Right lobe of liver (tissue), 6 donors: ENCODE measurements at regions of chr10 and their contacts with region 1.

Region 1: DNA sequence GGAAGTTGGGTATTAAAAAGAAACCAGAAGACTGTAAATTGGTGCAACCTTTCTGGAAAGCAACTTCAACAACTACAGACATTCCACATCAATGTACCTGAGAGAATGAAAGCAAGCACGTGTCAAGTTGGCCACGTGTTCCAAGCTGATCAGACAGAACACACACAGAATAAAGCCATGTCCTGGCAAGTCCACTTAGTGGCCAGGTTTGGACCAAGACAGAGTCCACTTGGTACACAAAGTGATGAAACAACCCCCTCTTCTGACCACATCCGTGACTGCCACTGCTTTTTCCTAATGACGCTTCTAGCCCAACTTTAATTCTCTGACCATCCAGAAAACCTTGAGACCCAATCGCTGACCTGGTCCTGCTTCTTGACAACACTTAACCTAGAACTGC is 109.4 kb downstream of the ABLIM1 start:
- DNase-seq: peak in 2 of 3 donors; percentile 71 to 84
- ATAC-seq: peak; percentile 71 to 91 (median 84)
- H3K4me3 ChIP-seq: no peak overlapping the region
- H3K27ac ChIP-seq: no peak overlapping the region
- H3K4me1 ChIP-seq: peaks cover 0 to 16% (median 6%) of the 10 kb centered on the region in 4 donors
- H3K27me3 ChIP-seq: no peaks in the 10 kb centered on the region
- CTCF ChIP-seq: peak; percentile 43 to 74 (median 56)
- POLR2A ChIP-seq: no peak

Region 2: DNA sequence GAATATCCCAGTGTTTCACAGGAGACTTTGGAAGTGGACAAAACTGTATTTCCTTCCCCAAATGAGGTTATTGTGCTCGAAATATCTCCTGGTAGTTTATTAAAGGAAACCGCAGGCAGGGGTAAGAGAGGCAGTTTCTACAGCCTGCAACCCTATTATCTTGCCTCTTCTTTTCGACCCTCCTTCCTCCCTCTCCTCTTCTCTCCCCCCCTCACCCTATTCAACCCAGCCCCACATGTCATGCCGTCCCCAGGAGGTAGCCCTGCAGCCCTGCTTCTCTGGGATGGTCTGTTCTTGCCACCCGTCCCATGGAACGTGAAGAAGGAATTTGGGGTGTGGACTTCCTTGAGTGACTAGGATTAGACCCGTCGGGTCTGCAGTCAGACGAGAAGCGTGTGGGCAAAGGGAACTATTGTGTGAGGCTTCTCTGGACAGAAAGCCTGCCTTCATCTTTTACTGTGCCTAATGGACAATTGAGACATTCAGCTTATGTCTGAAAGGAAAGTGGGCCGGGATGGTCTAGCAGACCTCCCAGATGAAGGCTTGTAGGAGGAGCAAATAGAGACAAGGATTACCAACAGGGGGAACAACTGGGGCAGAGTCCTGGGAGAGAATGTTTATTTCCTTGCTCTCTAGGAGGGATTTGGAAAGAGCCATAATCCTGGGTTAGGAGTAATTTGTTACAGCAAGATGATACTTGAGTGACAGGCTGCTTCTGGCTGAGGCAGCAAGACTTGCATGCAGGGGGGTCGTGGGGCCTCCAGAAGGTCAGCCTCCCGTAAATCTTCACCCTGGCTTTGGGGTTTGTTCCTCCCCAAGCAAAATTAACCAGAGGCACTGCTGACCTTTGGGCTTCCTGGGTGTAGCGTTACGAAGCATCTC is 1520.8 kb before region 1 on chr10:
- intact Hi-C with region 1: no loop called
- DNase-seq: no peak
- ATAC-seq: no peak
- H3K4me3 ChIP-seq: no peak overlapping the region
- H3K27ac ChIP-seq: no peak overlapping the region
- H3K4me1 ChIP-seq: peaks cover 0 to 35% (median 3%) of the 10 kb centered on the region in 4 donors
- H3K27me3 ChIP-seq: no peaks in the 10 kb centered on the region
- CTCF ChIP-seq: no peak
- POLR2A ChIP-seq: no peak

Region 3: GRCh38 chr10:114470956-114471905 is 77.4 kb before region 1 on chr10:
- intact Hi-C with region 1: loop called in 1 of 2 experiments (anchors 10 kb)
- DNase-seq: peak; percentile 60 to 77 (median 64)
- ATAC-seq: peak; percentile 85 to 90 (median 86)
- H3K4me3 ChIP-seq: no peak overlapping the region
- H3K27ac ChIP-seq: peak overlapping the region in 1 of 3 donors; percentile 61
- H3K4me1 ChIP-seq: peaks cover 0 to 37% (median 12%) of the 10 kb centered on the region in 4 donors
- H3K27me3 ChIP-seq: no peaks in the 10 kb centered on the region
- CTCF ChIP-seq: peak; percentile 72 to 96 (median 93)
- POLR2A ChIP-seq: no peak

Region 4: GRCh38 chr10:114694752-114695151 is 146.1 kb after region 1 on chr10:
- intact Hi-C with region 1: loop called in 1 of 2 experiments (anchors 10 kb)
- DNase-seq: peak; percentile 35 to 64 (median 57)
- ATAC-seq: peak; percentile 90 to 97 (median 94)
- H3K4me3 ChIP-seq: no peak overlapping the region
- H3K27ac ChIP-seq: no peak overlapping the region
- H3K4me1 ChIP-seq: no peaks in the 10 kb centered on the region
- H3K27me3 ChIP-seq: no peaks in the 10 kb centered on the region
- CTCF ChIP-seq: peak; percentile 47 to 81 (median 68)
- POLR2A ChIP-seq: no peak

Region 5: DNA sequence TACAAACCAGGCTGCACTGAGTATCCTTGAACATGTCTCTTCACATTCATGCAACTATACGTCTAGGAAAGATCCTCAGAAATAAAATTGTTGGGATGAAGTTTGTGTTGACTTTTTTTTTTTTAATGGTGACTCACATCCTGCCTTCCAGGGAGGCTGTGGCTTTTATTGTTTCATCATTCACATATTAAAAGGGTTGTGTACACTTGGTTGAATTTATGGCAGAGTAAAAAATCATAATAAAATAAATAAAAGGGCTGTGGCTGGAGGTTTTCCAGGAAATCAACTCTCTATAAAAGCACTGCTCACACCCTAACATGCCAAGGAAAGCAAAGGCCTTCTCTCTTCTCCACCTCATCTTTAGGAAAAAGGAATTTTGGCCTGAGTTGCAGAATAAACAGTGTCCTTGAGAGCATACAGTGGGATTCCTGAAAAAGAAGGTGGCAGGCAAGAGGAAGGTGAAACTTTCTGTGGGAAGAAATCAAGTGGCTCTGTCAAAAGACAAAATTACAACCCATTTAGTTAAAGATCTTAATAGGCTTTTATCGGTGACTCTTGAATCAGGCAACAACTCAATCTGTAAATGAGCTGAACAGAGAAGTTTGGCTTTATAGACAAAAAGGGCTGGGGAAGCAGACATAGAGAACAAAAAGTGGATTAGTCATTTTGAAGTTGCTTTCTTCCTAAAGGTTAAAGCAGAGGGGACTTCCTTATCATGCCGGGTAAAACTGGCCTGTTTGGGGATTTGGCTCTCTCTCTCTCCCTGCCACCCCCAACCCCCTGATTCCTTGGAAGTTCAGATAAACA is 231.3 kb after region 1 on chr10:
- intact Hi-C with region 1: loop called in 1 of 2 experiments (anchors 10 kb)
- DNase-seq: no peak
- ATAC-seq: peak in 1 of 4 donors; percentile 85
- H3K4me3 ChIP-seq: no peak overlapping the region
- H3K27ac ChIP-seq: no peak overlapping the region
- H3K4me1 ChIP-seq: peaks cover 0 to 4% (median 0%) of the 10 kb centered on the region in 4 donors
- H3K27me3 ChIP-seq: no peaks in the 10 kb centered on the region
- CTCF ChIP-seq: no peak
- POLR2A ChIP-seq: no peak